ENCODE measurements at regions of chr19 and their contacts with region 1.

Region 1: GRCh38 chr19:44954824-44955586 is at the start of gene CLPTM1:
- DNase-seq: peak; percentile 70
- H3K4me3 ChIP-seq: peak within 1 kb of the TSS; percentile 98
- CTCF ChIP-seq: no peak

Region 2: DNA sequence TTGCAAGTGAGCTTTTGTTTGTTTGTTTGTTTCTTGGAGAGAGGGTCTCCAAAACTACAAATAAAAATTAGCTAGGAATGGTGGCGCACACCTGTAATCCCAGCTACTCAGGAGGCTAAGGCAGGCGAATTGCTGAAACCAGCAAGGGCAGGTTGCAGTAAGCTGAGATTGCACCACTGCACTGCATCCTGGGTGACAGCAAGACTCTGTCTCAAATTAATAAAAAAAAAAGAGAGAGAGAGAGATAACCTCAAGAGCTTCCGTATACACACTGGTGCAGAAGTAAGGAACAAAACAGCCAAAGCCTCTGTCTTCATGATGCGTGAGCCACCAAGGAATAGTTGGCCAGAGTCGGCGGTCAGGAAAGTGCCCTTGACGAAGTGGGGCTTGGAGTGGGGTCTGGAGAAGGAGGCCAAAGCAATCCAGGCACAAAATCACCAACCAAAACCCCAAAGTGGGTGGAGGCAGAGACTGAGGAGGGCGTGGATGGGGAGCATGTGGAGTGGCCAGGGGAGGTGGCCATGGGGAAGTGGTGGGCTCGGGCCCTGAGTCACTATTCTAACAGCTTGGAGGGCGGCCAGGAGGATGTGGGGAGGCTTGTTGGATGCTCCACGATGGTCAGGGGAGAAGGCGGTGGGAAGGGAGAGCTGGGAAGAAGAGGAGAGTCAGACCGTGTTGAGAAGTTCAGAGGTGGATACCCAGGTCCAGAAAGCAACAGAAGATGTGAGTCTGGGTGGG is 85.1 kb before region 1 on chr19:
- CTCF ChIA-PET with region 1: no interaction called
- POLR2A ChIA-PET with region 1: no interaction called
- DNase-seq: no peak
- H3K4me3 ChIP-seq: no peak overlapping the region
- CTCF ChIP-seq: no peak

Region 3: GRCh38 chr19:44903602-44904425 is 51.2 kb before region 1 on chr19:
- CTCF ChIA-PET with region 1: interaction called, 208 read pairs
- POLR2A ChIA-PET with region 1: interaction called, 6 read pairs
- DNase-seq: no peak
- H3K4me3 ChIP-seq: no peak overlapping the region
- CTCF ChIP-seq: peak; percentile 97

Region 4: DNA sequence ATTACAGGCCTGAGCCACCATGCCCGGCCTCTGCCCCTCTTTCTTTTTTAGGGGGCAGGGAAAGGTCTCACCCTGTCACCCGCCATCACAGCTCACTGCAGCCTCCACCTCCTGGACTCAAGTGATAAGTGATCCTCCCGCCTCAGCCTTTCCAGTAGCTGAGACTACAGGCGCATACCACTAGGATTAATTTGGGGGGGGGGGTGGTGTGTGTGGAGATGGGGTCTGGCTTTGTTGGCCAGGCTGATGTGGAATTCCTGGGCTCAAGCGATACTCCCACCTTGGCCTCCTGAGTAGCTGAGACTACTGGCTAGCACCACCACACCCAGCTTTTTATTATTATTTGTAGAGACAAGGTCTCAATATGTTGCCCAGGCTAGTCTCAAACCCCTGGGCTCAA is 45.2 kb before region 1 on chr19:
- CTCF ChIA-PET with region 1: interaction called, 208 read pairs
- POLR2A ChIA-PET with region 1: interaction called, 3 read pairs
- DNase-seq: no peak
- H3K4me3 ChIP-seq: no peak overlapping the region
- CTCF ChIP-seq: no peak

Region 5: DNA sequence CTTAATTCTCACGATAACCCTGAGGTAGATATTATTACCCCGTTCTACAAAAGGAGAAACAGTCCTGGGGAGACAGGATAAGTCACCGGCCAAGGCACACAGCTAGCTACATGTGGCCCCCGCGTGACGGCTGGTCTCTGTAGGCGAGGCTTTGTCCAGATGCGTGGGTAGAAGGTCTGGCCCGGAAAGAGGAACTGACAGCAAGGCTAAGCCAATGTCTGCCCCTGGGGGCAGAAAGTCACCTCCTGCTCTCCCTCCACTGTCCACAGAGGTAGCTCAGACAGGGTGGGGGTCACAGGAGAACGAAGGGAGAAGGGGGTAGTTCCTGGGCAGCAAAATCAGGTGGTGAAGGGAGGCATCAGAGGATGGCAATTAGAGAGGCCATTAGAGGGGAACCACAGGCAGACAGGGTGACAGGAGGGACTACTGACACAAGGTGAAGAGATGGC is 11.2 kb before region 1 on chr19:
- CTCF ChIA-PET with region 1: interaction called, 22 read pairs
- POLR2A ChIA-PET with region 1: no interaction called
- DNase-seq: no peak
- H3K4me3 ChIP-seq: no peak overlapping the region
- CTCF ChIP-seq: no peak

Region 6: GRCh38 chr19:44974857-44975256 is 19.9 kb after region 1 on chr19:
- CTCF ChIA-PET with region 1: interaction called, 19 read pairs
- POLR2A ChIA-PET with region 1: interaction called, 3 read pairs
- DNase-seq: no peak
- H3K4me3 ChIP-seq: no peak overlapping the region
- CTCF ChIP-seq: no peak